Activated CD8-positive, alpha-beta memory T cell treated with anti-CD3 and anti-CD28 coated beads, Interleukin-2, amount 10 ng/mL, durations not matched to agents 7 days and 5 days (primary cell): ENCODE measurements at regions of chr2 and their contacts with region 1.

Region 1: GRCh38 chr2:178112202-178113152 is at the start of gene RBM45:
- DNase-seq: peak; percentile 92
- ATAC-seq: peak; percentile 89
- H3K4me3 Mint-ChIP-seq: peak within 1 kb of the TSS; percentile 98
- H3K27ac Mint-ChIP-seq: peak within 1 kb of the TSS; percentile 92
- H3K4me1 Mint-ChIP-seq: peaks cover 34% of the 10 kb centered on the region
- H3K27me3 Mint-ChIP-seq: no peaks in the 10 kb centered on the region
- total RNA-seq, gene RBM45: 15.8 to 16.6 TPM

Region 2: DNA sequence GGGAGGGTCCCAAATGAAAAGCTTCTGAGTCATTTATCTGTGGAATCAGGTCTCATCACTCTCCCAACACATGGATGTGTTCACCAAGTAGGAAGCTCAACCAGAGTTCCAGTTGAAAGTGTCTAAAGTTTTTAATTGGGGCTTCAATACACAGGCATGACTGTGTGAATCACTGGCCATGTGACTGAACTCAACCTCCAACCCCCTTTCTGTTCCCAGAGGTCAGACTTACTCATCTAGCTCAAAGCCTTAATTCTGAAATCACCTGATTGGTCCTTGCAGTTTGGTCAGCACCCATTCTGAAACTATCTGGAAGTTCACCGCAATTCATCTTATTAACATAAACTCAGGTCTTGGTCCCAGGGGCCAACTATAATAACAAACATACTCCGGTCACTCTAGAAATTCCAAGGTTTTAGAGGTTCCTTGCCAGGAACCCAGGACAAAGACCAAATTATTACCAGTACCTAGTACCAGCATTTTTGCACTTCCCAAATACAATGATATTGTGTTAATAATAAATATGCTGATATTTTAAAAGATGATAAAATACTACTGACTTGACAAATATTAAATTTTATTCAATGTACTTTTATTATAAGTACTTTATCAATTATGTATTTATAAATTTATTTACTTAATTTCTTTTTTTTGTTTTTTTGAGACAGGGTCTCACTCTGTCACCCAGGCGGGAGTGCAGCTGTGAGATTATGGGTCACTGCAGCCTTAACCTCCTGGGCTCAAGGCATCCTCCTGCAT is 11.0 kb before region 1 on chr2:
- CTCF ChIA-PET with region 1: interaction called, 14 read pairs
- DNase-seq: no peak
- ATAC-seq: no peak
- H3K4me3 Mint-ChIP-seq: no peak overlapping the region
- H3K27ac Mint-ChIP-seq: no peak overlapping the region
- H3K4me1 Mint-ChIP-seq: no peaks in the 10 kb centered on the region
- H3K27me3 Mint-ChIP-seq: no peaks in the 10 kb centered on the region

Region 3: DNA sequence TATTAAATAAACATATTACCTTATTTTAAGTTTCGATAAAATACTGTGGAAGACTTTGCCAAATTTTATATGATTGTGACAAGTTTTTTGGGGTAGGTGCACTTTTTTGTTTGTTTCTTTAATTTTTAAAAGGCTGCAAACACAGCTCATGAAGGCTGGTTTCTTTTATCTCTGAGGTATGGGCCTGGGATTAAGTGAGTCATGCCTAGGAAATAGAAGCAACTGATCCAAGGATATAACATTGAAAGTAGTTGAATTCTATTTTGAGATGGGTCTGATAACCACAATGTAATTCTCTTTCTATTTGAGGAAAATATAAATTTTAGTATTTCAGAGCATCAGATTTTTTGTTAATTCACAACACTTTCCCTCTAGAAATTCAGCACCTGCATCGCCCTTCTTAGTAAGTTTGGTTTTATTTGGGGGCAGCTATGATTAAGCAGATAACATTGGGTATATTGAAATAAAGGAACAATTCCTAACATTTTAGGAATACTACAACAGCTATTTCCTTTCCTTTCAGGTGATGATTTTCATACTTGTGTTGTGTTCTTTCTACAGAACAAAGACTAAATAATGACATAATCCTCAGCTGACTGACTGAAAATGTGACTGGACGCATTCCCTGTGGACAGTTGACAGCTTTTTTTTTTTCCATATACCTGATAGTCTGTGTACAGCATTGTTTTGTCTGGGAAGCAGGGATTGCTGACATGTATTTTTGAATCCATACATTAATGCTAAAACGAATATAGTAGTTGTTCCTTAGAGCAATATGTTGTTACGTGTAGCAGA is 16.6 kb after region 1 on chr2:
- CTCF ChIA-PET with region 1: interaction called, 17 read pairs
- DNase-seq: no peak
- ATAC-seq: no peak
- H3K4me3 Mint-ChIP-seq: no peak overlapping the region
- H3K27ac Mint-ChIP-seq: no peak overlapping the region
- H3K4me1 Mint-ChIP-seq: peaks cover 2% of the 10 kb centered on the region
- H3K27me3 Mint-ChIP-seq: no peaks in the 10 kb centered on the region

Region 4: DNA sequence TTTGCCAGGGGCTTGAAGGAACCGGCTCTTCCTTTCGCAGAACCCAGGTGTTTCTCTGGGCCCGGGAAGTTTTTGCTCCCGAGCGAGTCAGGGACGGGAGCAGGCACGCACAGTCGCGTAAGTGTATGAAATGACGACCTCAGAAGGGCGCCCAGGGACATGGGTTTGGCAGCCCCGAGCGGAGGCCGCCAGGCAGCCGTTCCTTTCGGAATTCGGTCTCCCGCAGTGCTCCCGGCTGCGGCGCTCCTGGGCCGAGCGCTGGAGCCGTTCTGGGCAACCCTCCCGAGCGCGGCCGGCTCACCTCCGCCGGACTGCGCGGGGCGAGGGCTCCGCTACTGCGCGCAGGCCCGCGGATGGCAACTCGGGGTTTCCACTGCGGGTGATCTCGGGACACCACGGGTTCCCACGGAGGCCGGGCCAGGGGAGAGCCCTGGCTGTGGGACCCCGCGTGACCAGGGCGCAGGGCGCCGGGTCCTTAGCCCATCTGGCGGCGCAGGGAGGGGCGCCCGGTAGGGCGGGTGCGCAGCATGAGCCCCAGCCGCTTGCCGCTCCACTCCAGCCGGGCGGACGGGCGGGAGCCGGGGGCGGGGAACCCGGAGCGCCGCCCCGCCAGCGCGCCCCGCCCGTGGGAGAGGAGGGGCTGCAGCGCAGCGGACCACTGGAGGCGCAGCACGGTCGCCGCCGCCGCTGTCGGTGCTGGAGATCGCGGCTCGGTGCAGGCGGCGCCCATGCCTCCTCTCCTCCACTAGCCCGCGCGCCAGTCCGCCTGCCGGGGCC is 81.5 kb after region 1 on chr2 and contains the start of gene OSBPL6:
- CTCF ChIA-PET with region 1: interaction called, 10 read pairs
- DNase-seq: peak; percentile 75
- ATAC-seq: peak; percentile 94
- H3K4me3 Mint-ChIP-seq: peak within 1 kb of the TSS; percentile 66
- H3K27ac Mint-ChIP-seq: no peak within 1 kb of the TSS
- H3K4me1 Mint-ChIP-seq: peaks cover 19% of the 10 kb centered on the region
- H3K27me3 Mint-ChIP-seq: peaks cover 62% of the 10 kb centered on the region
- total RNA-seq, gene OSBPL6: 0.73 to 2.9 TPM

Region 5: GRCh38 chr2:178282075-178282815 is 169.8 kb after region 1 on chr2:
- CTCF ChIA-PET with region 1: interaction called, 10 read pairs
- DNase-seq: no peak
- ATAC-seq: no peak
- H3K4me3 Mint-ChIP-seq: no peak overlapping the region
- H3K27ac Mint-ChIP-seq: no peak overlapping the region
- H3K4me1 Mint-ChIP-seq: peaks cover 6% of the 10 kb centered on the region
- H3K27me3 Mint-ChIP-seq: peaks cover 32% of the 10 kb centered on the region

Region 6: DNA sequence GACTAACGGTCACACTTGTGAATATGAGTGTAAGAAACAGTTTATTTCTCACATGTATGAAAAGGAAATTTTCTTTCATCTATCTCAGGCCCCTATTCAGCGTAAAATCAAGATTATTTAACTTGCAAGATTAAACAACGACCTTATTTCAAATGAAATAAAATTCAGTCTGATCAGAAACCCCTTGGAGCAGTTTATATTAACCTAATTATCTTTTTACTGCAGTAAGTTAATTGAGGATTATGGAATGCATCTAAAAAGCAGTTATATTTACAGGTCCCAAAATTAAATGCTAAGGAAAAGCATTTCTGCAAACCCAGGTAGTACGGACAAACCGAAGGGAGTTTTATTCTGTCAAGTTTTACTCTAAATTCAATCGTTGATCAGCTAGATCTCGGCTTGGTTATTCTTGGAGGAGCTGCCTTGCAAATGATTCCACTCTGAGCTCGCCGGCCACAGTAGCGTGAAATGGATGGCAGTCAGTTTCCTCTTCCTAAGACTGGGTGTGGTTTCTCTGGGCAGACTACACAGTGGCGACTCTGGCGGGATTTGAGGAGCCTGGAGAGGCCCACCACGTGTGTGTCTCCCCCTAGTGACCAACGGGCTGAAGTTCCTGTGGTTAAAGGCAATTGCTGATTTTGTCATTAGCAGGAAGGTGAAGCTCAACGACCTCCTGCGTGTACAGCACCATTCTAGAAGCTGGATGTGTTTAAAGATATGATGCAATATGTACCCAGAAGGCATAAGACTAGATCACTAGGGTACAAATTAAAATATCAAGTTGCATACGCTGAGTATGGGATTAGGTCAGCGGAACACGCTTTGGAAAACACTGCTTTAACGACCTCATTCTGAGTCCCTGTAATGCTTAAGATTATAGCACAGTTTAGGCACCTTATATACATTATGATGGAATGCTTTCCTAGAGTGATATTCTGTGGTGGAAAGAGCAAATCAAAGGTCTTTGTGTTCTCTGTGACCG is 302.1 kb after region 1 on chr2:
- CTCF ChIA-PET with region 1: interaction called, 18 read pairs
- DNase-seq: peak; percentile 95
- ATAC-seq: peak; percentile 75
- H3K4me3 Mint-ChIP-seq: peak overlapping the region; percentile 81
- H3K27ac Mint-ChIP-seq: peak overlapping the region; percentile 94
- H3K4me1 Mint-ChIP-seq: peaks cover 70% of the 10 kb centered on the region
- H3K27me3 Mint-ChIP-seq: no peaks in the 10 kb centered on the region